PC-9 (cell line): ENCODE measurements at regions of chr1 and their contacts with region 1.

Region 1: GRCh38 chr1:163071405-163072255 is 2.5 kb downstream of the RGS4 start:
- DNase-seq: peak; percentile 35 to 60
- H3K4me3 ChIP-seq: no peak overlapping the region
- H3K27ac ChIP-seq: no peak overlapping the region
- H3K4me1 ChIP-seq: no peaks in the 10 kb centered on the region
- H3K27me3 ChIP-seq: no peaks in the 10 kb centered on the region
- CTCF ChIP-seq: peak; percentile 74

Region 2: GRCh38 chr1:162206749-162207635 is 864.6 kb before region 1 on chr1:
- CTCF ChIA-PET with region 1: no interaction called
- POLR2A ChIA-PET with region 1: no interaction called
- intact Hi-C with region 1: no loop called
- DNase-seq: peak in 1 of 2 experiments; percentile 97
- H3K4me3 ChIP-seq: no peak overlapping the region
- H3K27ac ChIP-seq: peak overlapping the region; percentile 60
- H3K4me1 ChIP-seq: peaks cover 33% of the 10 kb centered on the region
- H3K27me3 ChIP-seq: no peaks in the 10 kb centered on the region
- CTCF ChIP-seq: no peak; the same call in 1 of the 2 replicates

Region 3: DNA sequence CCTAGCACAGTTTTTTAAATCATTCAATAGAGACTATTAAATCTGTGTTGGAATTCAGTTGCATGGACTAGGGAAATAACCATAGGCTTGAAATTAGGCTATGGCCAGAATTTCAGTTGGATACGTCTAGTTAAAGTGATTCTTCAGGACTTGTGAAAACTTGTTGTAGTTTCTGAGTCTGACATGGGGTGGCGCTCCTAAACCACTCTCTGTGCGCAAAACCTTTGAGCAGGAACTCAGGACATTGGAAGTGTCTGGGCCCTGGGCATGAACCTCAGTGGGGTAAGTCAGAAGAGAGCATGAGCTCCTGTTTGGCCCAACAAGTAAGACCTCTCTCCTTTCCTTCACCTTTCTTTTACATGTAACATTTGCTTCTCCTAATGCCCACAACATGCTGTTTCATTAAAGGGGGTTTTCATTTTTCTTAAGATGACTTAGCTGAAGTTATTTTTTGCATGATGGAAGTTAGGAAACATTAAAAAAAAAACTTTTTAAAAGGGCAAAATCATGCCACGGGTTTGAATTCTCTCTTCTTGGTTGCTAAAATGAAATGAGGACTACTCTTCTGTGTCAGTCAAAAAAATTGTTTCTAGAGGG is 193.5 kb before region 1 on chr1:
- CTCF ChIA-PET with region 1: no interaction called
- POLR2A ChIA-PET with region 1: no interaction called
- intact Hi-C with region 1: loop called (anchors 2 kb)
- DNase-seq: peak in 1 of 2 experiments; percentile 47
- H3K4me3 ChIP-seq: no peak overlapping the region
- H3K27ac ChIP-seq: no peak overlapping the region
- H3K4me1 ChIP-seq: no peaks in the 10 kb centered on the region
- H3K27me3 ChIP-seq: no peaks in the 10 kb centered on the region
- CTCF ChIP-seq: peak; percentile 89

Region 4: GRCh38 chr1:162956922-162957321 is 114.7 kb before region 1 on chr1:
- CTCF ChIA-PET with region 1: no interaction called
- POLR2A ChIA-PET with region 1: no interaction called
- intact Hi-C with region 1: no loop called
- DNase-seq: no peak
- H3K4me3 ChIP-seq: no peak overlapping the region
- H3K27ac ChIP-seq: no peak overlapping the region
- H3K4me1 ChIP-seq: no peaks in the 10 kb centered on the region
- H3K27me3 ChIP-seq: no peaks in the 10 kb centered on the region
- CTCF ChIP-seq: no peak

Region 5: GRCh38 chr1:163085041-163085903 is 13.6 kb after region 1 on chr1:
- CTCF ChIA-PET with region 1: interaction called, 18 read pairs
- POLR2A ChIA-PET with region 1: no interaction called
- intact Hi-C with region 1: no loop called
- DNase-seq: no peak
- H3K4me3 ChIP-seq: no peak overlapping the region
- H3K27ac ChIP-seq: peak overlapping the region; percentile 7; the same call in 1 of the 2 replicates
- H3K4me1 ChIP-seq: peaks cover 26% of the 10 kb centered on the region
- H3K27me3 ChIP-seq: no peaks in the 10 kb centered on the region
- CTCF ChIP-seq: no peak

Region 6: GRCh38 chr1:163321311-163322305 is 250.0 kb after region 1 on chr1 and contains the start of gene NUF2:
- CTCF ChIA-PET with region 1: no interaction called
- POLR2A ChIA-PET with region 1: no interaction called
- intact Hi-C with region 1: loop called (anchors 10 kb)
- DNase-seq: peak; percentile 94 to 97
- H3K4me3 ChIP-seq: peak within 1 kb of the TSS; percentile 96
- H3K27ac ChIP-seq: peak within 1 kb of the TSS; percentile 79
- H3K4me1 ChIP-seq: peaks cover 25% of the 10 kb centered on the region
- H3K27me3 ChIP-seq: no peaks in the 10 kb centered on the region
- CTCF ChIP-seq: 0 out of 2 replicates have a peak, but pooled peaks have one; percentile 16
- total RNA-seq, gene NUF2: 21.6 and 33.3 TPM in 2 replicates